Activated CD4-positive, alpha-beta memory T cell treated with anti-CD3 and anti-CD28 coated beads for 36 hours (primary cell): ENCODE measurements at regions of chr1 and their contacts with region 1.

Region 1: GRCh38 chr1:3624200-3625136 is at the start of gene TPRG1L:
- DNase-seq: peak; percentile 98
- H3K4me3 Mint-ChIP-seq: peak within 1 kb of the TSS; percentile 86
- H3K27ac Mint-ChIP-seq: peak within 1 kb of the TSS; percentile 61
- H3K4me1 Mint-ChIP-seq: peaks cover 34% of the 10 kb centered on the region
- H3K27me3 Mint-ChIP-seq: no peaks in the 10 kb centered on the region
- total RNA-seq, gene TPRG1L: 9.2 to 10.4 TPM

Region 2: DNA sequence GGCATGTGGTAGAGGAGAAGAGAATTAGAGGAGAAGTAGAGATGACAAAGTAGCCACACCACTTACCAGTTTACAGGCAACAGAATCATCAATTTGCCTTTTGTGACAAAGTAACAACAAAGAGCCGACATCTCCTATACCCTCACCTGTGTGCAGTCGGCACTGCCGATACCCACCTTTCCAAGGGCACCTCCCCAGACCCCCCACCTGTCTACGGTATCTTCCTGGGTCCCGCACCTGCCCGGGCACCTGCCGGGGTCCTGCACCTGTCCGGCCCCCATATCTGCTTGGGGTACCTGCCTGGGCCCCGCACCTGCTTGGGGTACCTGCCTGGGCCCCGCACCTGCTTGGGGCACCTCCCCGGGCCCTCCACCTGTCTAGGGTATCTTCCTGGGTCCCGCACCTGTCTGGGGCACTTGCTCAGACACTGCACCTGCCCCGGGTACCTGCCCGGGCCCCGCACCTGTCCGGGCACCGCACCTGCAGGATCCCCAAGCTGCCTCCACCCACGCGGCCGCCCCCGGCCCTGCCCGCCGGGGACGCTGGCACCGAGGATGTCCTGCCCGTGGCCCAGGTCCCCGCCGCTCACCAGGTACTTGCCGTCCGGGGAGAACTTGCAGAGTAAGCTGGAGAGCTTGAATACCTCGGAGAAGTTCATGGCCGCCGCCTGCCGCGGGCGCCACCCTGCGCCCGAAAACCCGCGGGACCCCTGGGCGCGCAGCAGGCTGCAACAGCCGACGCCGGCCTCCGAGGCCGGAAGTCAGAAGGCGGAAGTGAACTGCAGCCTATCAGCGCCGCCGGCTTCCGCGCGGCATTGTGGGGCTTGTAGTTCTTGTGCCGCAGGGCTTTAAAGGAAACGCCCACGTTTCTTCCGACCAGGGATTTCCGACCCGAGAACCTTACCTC is 25.1 kb after region 1 on chr1 and contains the start of gene WRAP73:
- CTCF ChIA-PET with region 1: interaction called, 6 read pairs
- POLR2A ChIA-PET with region 1: no interaction called
- intact Hi-C with region 1: loop called (anchors 1 kb)
- DNase-seq: peak; percentile 95
- H3K4me3 Mint-ChIP-seq: peak within 1 kb of the TSS; percentile 76
- H3K27ac Mint-ChIP-seq: no peak within 1 kb of the TSS
- H3K4me1 Mint-ChIP-seq: peaks cover 23% of the 10 kb centered on the region
- H3K27me3 Mint-ChIP-seq: peaks cover 25% of the 10 kb centered on the region
- total RNA-seq, gene WRAP73: 34.5 to 34.6 TPM